B cell (primary cell): ENCODE measurements at regions of chr19 and their contacts with region 1.

Region 1: GRCh38 chr19:42450314-42450934 is 7.7 kb upstream of the CXCL17 start:
- DNase-seq: peak; percentile 89
- ATAC-seq: peak; percentile 99
- H3K4me3 ChIP-seq: no peak overlapping the region
- H3K4me3 Mint-ChIP-seq: no peak overlapping the region
- H3K27ac ChIP-seq: no peak overlapping the region
- H3K27ac Mint-ChIP-seq: no peak overlapping the region
- H3K4me1 ChIP-seq: peaks cover 18 to 20% of the 10 kb centered on the region in 2 donors
- H3K4me1 Mint-ChIP-seq: peaks cover 12% of the 10 kb centered on the region
- H3K27me3 ChIP-seq: peaks cover 0 to 3% (median 0%) of the 10 kb centered on the region in 4 experiments
- H3K27me3 Mint-ChIP-seq: peaks cover 6% of the 10 kb centered on the region
- CTCF ChIP-seq: peak; percentile 95

Region 2: GRCh38 chr19:42066075-42066754 is 384.2 kb before region 1 on chr19:
- CTCF ChIA-PET with region 1: no interaction called
- POLR2A ChIA-PET with region 1: no interaction called
- intact Hi-C with region 1: no loop called
- DNase-seq: no peak
- ATAC-seq: no peak
- H3K4me3 ChIP-seq: no peak overlapping the region
- H3K4me3 Mint-ChIP-seq: no peak overlapping the region
- H3K27ac ChIP-seq: no peak overlapping the region
- H3K27ac Mint-ChIP-seq: no peak overlapping the region
- H3K4me1 ChIP-seq: peaks cover 12 to 21% of the 10 kb centered on the region in 2 donors
- H3K4me1 Mint-ChIP-seq: no peaks in the 10 kb centered on the region
- H3K27me3 ChIP-seq: peaks cover 0 to 43% (median 23%) of the 10 kb centered on the region in 4 experiments
- H3K27me3 Mint-ChIP-seq: peaks cover 22% of the 10 kb centered on the region
- CTCF ChIP-seq: no peak

Region 3: GRCh38 chr19:42433503-42434260 is 16.7 kb before region 1 on chr19:
- CTCF ChIA-PET with region 1: interaction called, 19 read pairs
- POLR2A ChIA-PET with region 1: no interaction called
- intact Hi-C with region 1: no loop called
- DNase-seq: peak; percentile 65
- ATAC-seq: peak; percentile 75
- H3K4me3 ChIP-seq: no peak overlapping the region
- H3K4me3 Mint-ChIP-seq: no peak overlapping the region
- H3K27ac ChIP-seq: no peak overlapping the region
- H3K27ac Mint-ChIP-seq: no peak overlapping the region
- H3K4me1 ChIP-seq: peaks cover 0 to 4% of the 10 kb centered on the region in 2 donors
- H3K4me1 Mint-ChIP-seq: peaks cover 6% of the 10 kb centered on the region
- H3K27me3 ChIP-seq: peaks cover 0 to under 1% (median 0%) of the 10 kb centered on the region in 4 experiments
- H3K27me3 Mint-ChIP-seq: no peaks in the 10 kb centered on the region
- CTCF ChIP-seq: peak; percentile 81

Region 4: GRCh38 chr19:42468273-42468796 is 17.9 kb after region 1 on chr19:
- CTCF ChIA-PET with region 1: interaction called, 57 read pairs
- POLR2A ChIA-PET with region 1: no interaction called
- intact Hi-C with region 1: loop called (anchors 1 kb)
- DNase-seq: no peak
- ATAC-seq: no peak
- H3K4me3 ChIP-seq: no peak overlapping the region
- H3K4me3 Mint-ChIP-seq: no peak overlapping the region
- H3K27ac ChIP-seq: no peak overlapping the region
- H3K27ac Mint-ChIP-seq: no peak overlapping the region
- H3K4me1 ChIP-seq: peaks cover 38 to 48% of the 10 kb centered on the region in 2 donors
- H3K4me1 Mint-ChIP-seq: peaks cover 47% of the 10 kb centered on the region
- H3K27me3 ChIP-seq: no peaks in the 10 kb centered on the region
- H3K27me3 Mint-ChIP-seq: no peaks in the 10 kb centered on the region
- CTCF ChIP-seq: no peak

Region 5: DNA sequence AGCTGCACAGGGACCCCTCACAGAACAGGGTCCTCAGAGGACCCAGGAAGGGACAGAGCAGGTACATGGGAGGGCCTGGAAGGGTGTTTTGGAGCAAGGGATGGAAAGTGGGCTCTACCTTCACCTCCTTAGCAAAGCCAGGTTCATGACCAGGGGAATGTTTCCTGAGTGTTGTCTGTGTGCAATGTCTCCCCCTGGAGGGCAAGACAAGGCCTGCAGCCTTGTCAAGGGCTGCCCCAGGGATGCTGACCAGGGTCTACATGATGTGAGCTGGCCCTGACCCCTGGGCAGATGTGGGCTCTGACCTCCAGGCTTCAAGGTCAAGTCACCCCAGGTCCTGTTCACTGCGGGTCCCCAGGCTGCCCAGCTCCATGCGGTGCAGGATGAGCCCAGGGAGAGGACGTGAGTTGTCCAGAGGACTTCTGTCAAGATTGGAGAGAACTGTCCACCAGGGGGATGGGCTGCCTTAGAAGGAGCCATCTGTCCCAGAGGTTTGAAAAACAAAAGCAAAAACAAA is 78.9 kb after region 1 on chr19:
- CTCF ChIA-PET with region 1: interaction called, 348 read pairs
- POLR2A ChIA-PET with region 1: interaction called, 10 read pairs
- intact Hi-C with region 1: no loop called
- DNase-seq: peak; percentile 85
- ATAC-seq: peak; percentile 80
- H3K4me3 ChIP-seq: peak overlapping the region in 3 of 5 experiments; percentile 48 to 74 (median 56)
- H3K4me3 Mint-ChIP-seq: peak overlapping the region; percentile 87
- H3K27ac ChIP-seq: peak overlapping the region; percentile 45 to 67
- H3K27ac Mint-ChIP-seq: peak overlapping the region; percentile 88
- H3K4me1 ChIP-seq: peaks cover 22 to 25% of the 10 kb centered on the region in 2 donors
- H3K4me1 Mint-ChIP-seq: peaks cover 35% of the 10 kb centered on the region
- H3K27me3 ChIP-seq: no peaks in the 10 kb centered on the region
- H3K27me3 Mint-ChIP-seq: no peaks in the 10 kb centered on the region
- CTCF ChIP-seq: peak; percentile 97

Region 6: GRCh38 chr19:42563352-42564210 is 113.2 kb after region 1 on chr19:
- CTCF ChIA-PET with region 1: interaction called, 10 read pairs
- POLR2A ChIA-PET with region 1: no interaction called
- intact Hi-C with region 1: no loop called
- DNase-seq: peak; percentile 66
- ATAC-seq: peak; percentile 54
- H3K4me3 ChIP-seq: no peak overlapping the region
- H3K4me3 Mint-ChIP-seq: no peak overlapping the region
- H3K27ac ChIP-seq: no peak overlapping the region
- H3K27ac Mint-ChIP-seq: no peak overlapping the region
- H3K4me1 ChIP-seq: peaks cover 17 to 21% of the 10 kb centered on the region in 2 donors
- H3K4me1 Mint-ChIP-seq: peaks cover 20% of the 10 kb centered on the region
- H3K27me3 ChIP-seq: peaks cover 0 to 9% (median 0%) of the 10 kb centered on the region in 4 experiments
- H3K27me3 Mint-ChIP-seq: peaks cover 22% of the 10 kb centered on the region
- CTCF ChIP-seq: peak; percentile 80